Heart right ventricle (tissue), 16 donors: ENCODE measurements at regions of chr11 and their contacts with region 1.

Region 1: DNA sequence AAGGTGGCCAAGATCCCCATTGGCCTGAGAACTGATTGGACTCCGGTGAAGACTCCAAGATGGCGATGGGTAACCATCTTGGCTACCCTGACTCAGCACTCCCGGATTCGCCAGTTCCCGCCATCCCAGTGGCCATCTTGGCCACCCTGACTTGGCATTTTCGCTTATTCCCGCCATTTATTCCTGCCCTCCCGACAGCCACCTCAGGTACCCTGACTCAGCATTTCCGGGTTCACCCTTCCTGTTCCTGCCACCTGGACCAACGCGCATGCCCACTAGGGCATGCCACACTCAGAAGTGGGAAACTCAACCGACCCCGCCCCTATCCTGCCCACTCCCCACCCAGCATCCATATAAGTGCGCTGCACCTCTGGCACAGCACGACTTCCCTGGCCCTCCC is 7.8 kb downstream of the OR8K5 start:
- DNase-seq: no peak
- ATAC-seq: no peak
- H3K4me3 ChIP-seq: no peak overlapping the region
- H3K27ac ChIP-seq: no peak overlapping the region
- H3K4me1 ChIP-seq: no peaks in the 10 kb centered on the region
- H3K27me3 ChIP-seq: no peaks in the 10 kb centered on the region
- CTCF ChIP-seq: no peak

Region 2: DNA sequence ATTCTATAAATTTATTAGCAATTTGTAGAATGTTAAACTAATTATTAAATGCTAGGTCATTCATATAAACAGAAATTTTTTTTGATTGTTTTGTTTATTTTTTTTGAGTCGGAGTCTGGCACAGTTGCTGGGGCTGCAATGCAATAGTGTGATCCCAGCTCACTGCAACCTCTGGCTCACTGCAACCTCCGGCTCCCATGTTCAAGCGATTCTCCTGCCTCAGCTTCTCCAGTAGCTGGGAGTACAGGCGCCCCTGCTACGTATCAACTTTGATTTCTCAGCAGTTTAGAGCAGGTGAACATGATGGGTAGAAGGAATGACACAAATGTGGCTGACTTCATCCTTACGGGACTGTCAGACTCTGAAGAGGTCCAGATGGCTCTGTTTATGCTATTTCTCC is 30.3 kb before region 1 on chr11 and contains the start of gene OR8H3:
- intact Hi-C with region 1: no loop called
- DNase-seq: no peak
- ATAC-seq: no peak
- H3K4me3 ChIP-seq: no peak within 1 kb of the TSS
- H3K27ac ChIP-seq: no peak within 1 kb of the TSS
- H3K4me1 ChIP-seq: no peaks in the 10 kb centered on the region
- H3K27me3 ChIP-seq: no peaks in the 10 kb centered on the region
- CTCF ChIP-seq: no peak
- total RNA-seq, gene OR8H3: not detected

Region 3: GRCh38 chr11:56486801-56487200 is 334.5 kb after region 1 on chr11:
- intact Hi-C with region 1: loop called in 1 of 10 experiments (anchors 5 kb)
- DNase-seq: no peak
- ATAC-seq: no peak
- H3K4me3 ChIP-seq: no peak overlapping the region
- H3K27ac ChIP-seq: no peak overlapping the region
- H3K4me1 ChIP-seq: no peaks in the 10 kb centered on the region
- H3K27me3 ChIP-seq: no peaks in the 10 kb centered on the region
- CTCF ChIP-seq: no peak

Region 4: GRCh38 chr11:57015679-57016078 is 863.3 kb after region 1 on chr11:
- intact Hi-C with region 1: no loop called
- DNase-seq: no peak
- ATAC-seq: no peak
- H3K4me3 ChIP-seq: no peak overlapping the region
- H3K27ac ChIP-seq: no peak overlapping the region
- H3K4me1 ChIP-seq: no peaks in the 10 kb centered on the region
- H3K27me3 ChIP-seq: no peaks in the 10 kb centered on the region
- CTCF ChIP-seq: no peak